Activated CD8-positive, alpha-beta T cell treated with anti-CD3 and anti-CD28 coated beads for 36 hours (primary cell): ENCODE measurements at regions of chr3 and their contacts with region 1.

Region 1: DNA sequence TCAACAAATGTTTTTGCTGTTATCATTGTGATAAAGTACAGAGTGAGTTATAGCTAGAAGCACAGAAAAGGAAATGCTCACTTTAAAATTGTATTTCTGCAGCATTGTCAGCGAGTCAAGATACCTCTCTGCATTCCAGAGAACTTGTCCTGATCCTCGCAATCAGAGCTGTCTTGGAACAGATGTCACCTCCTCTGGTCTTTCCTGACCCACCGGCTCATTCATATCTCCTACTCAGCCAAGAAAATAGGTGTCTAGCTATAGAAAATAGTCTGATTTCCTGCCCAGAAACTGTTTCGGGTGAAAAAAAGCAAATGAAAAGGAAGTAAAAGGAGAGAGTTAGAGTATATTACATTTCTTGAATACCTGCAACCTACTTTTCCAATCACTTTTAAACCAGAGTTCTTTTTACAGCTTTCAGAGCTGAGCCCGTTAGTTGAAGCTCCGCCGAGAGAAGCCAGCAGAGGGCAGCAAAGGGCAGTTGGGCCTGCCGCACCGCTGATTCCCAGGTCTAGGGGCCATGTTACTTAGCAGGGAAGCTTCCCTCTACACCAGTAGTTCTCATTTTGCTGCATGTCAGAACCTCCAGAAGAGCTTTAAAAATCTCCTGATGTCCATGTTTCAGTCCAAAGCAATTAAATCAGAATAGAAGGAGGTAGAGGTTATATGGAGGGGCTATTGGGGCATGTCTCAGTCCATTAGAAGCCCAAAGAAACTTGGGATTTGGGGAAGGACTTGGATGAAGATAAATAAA is 185.7 kb upstream of the THRB start:
- DNase-seq: peak; percentile 71
- ATAC-seq: peak; percentile 56
- H3K4me3 Mint-ChIP-seq: no peak overlapping the region
- H3K27ac Mint-ChIP-seq: no peak overlapping the region
- H3K4me1 Mint-ChIP-seq: peaks cover 9% of the 10 kb centered on the region
- H3K27me3 Mint-ChIP-seq: peaks cover 31% of the 10 kb centered on the region
- CTCF ChIP-seq: peak; percentile 81

Region 2: GRCh38 chr3:24264748-24265158 is 415.6 kb before region 1 on chr3:
- CTCF ChIA-PET with region 1: interaction called, 5 read pairs
- POLR2A ChIA-PET with region 1: no interaction called
- intact Hi-C with region 1: loop called (anchors 10 kb)
- DNase-seq: peak; percentile 20
- ATAC-seq: no peak
- H3K4me3 Mint-ChIP-seq: no peak overlapping the region
- H3K27ac Mint-ChIP-seq: no peak overlapping the region
- H3K4me1 Mint-ChIP-seq: no peaks in the 10 kb centered on the region
- H3K27me3 Mint-ChIP-seq: peaks cover 7% of the 10 kb centered on the region
- CTCF ChIP-seq: peak; percentile 77

Region 3: GRCh38 chr3:24704496-24704895 is 24.1 kb after region 1 on chr3:
- CTCF ChIA-PET with region 1: no interaction called
- POLR2A ChIA-PET with region 1: no interaction called
- intact Hi-C with region 1: no loop called
- DNase-seq: no peak
- ATAC-seq: no peak
- H3K4me3 Mint-ChIP-seq: no peak overlapping the region
- H3K27ac Mint-ChIP-seq: no peak overlapping the region
- H3K4me1 Mint-ChIP-seq: no peaks in the 10 kb centered on the region
- H3K27me3 Mint-ChIP-seq: peaks cover 4% of the 10 kb centered on the region
- CTCF ChIP-seq: no peak

Region 4: GRCh38 chr3:24722087-24722486 is 41.7 kb after region 1 on chr3:
- CTCF ChIA-PET with region 1: no interaction called
- POLR2A ChIA-PET with region 1: no interaction called
- intact Hi-C with region 1: no loop called
- DNase-seq: no peak
- ATAC-seq: no peak
- H3K4me3 Mint-ChIP-seq: no peak overlapping the region
- H3K27ac Mint-ChIP-seq: no peak overlapping the region
- H3K4me1 Mint-ChIP-seq: no peaks in the 10 kb centered on the region
- H3K27me3 Mint-ChIP-seq: no peaks in the 10 kb centered on the region
- CTCF ChIP-seq: no peak